T-cell (primary cell): ENCODE measurements at regions of chr3 and their contacts with region 1.

Region 1: DNA sequence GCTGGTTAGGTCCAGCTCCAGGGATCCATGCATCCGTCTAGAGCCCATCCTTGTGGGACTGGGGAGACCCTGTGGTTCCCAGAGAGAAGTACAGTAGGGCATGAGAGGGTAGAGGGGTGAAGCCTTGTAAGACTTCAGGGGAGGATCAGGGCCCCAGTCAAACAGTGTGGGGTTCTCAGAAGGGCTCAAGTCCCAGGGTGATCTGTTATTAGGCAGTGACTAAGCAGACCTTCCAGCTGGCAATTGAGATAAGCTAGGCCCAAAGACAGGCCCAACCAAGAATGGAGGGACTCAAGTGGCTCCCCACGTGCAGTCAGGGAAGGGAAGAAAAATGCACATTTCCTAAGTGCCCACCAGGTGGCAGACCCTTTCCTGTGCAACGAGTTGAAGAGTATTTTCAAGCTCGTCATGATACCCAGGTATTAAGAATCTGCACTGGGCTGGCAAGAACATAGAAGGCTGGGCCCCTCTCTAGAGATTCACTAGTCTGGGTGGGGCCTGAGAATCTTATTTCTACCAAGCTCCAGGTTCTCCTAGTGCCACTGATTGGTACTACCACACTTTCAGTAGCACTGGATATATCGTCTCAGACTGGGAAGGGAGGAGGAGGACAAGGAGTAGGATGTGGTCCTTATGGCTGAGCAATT is 240.8 kb downstream of the NR1D2 start:
- DNase-seq: peak in 4 of 35 experiments; percentile 2 to 32 (median 2)
- ATAC-seq: peak in 1 of 4 experiments; percentile 41
- H3K4me3 ChIP-seq: no peak overlapping the region
- H3K4me3 Mint-ChIP-seq: no peak overlapping the region
- H3K27ac ChIP-seq: no peak overlapping the region
- H3K27ac Mint-ChIP-seq: no peak overlapping the region
- H3K4me1 ChIP-seq: no peaks in the 10 kb centered on the region
- H3K4me1 Mint-ChIP-seq: no peaks in the 10 kb centered on the region
- H3K27me3 ChIP-seq: no peaks in the 10 kb centered on the region
- H3K27me3 Mint-ChIP-seq: no peaks in the 10 kb centered on the region

Region 2: DNA sequence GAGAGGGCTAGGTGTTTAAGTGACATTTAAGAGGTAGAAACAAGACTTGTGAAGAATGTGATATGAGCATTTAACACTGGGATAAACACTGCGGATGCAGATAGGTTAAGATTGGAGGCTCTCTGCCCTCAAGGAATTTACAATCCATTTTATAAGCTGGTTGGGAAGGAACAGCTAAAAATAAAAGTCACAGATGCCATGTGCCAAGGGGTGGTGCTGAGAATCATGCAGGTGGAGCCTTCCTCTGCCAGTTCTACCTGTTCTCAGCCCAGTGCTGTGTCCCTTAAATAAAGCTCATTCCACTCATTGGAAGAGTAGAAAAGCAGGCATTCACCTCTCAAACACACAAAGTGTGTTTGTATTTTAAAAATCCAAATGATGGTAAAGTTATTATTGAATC is 46.9 kb after region 1 on chr3:
- CTCF ChIA-PET with region 1: interaction called, 5 to 12 read pairs
- POLR2A ChIA-PET with region 1: no interaction called
- DNase-seq: no peak
- ATAC-seq: no peak
- H3K4me3 ChIP-seq: no peak overlapping the region
- H3K4me3 Mint-ChIP-seq: no peak overlapping the region
- H3K27ac ChIP-seq: no peak overlapping the region
- H3K27ac Mint-ChIP-seq: no peak overlapping the region
- H3K4me1 ChIP-seq: no peaks in the 10 kb centered on the region
- H3K4me1 Mint-ChIP-seq: no peaks in the 10 kb centered on the region
- H3K27me3 ChIP-seq: no peaks in the 10 kb centered on the region
- H3K27me3 Mint-ChIP-seq: peaks cover 0 to 2% of the 10 kb centered on the region in 2 donors

Region 3: GRCh38 chr3:24259901-24260512 is 74.1 kb after region 1 on chr3:
- CTCF ChIA-PET with region 1: interaction called in 1 of 2 experiments, 10 read pairs
- POLR2A ChIA-PET with region 1: no interaction called
- DNase-seq: no peak
- ATAC-seq: no peak
- H3K4me3 ChIP-seq: no peak overlapping the region
- H3K4me3 Mint-ChIP-seq: no peak overlapping the region
- H3K27ac ChIP-seq: no peak overlapping the region
- H3K27ac Mint-ChIP-seq: no peak overlapping the region
- H3K4me1 ChIP-seq: no peaks in the 10 kb centered on the region
- H3K4me1 Mint-ChIP-seq: no peaks in the 10 kb centered on the region
- H3K27me3 ChIP-seq: no peaks in the 10 kb centered on the region
- H3K27me3 Mint-ChIP-seq: no peaks in the 10 kb centered on the region